Activated T-helper 2 cell treated with anti-CD3 and anti-CD28 coated beads, Interferon-gamma antibody, Interleukin-2, Interleukin-4, amounts not matched to agents 10 μg/mL and 5 μg/mL and 100 μg/mL, durations not matched to agents 14 hours and 24 hours and 36 hours (primary cell): ENCODE measurements at regions of chr15 and their contacts with region 1.

Region 1: GRCh38 chr15:40754883-40755811 is at the start of gene RMDN3:
- DNase-seq: peak; percentile 93
- H3K4me3 Mint-ChIP-seq: peak within 1 kb of the TSS; percentile 94
- H3K27ac Mint-ChIP-seq: peak within 1 kb of the TSS; percentile 98
- H3K4me1 Mint-ChIP-seq: peaks cover 27% of the 10 kb centered on the region
- H3K27me3 Mint-ChIP-seq: no peaks in the 10 kb centered on the region
- total RNA-seq, gene RMDN3: 28.3 and 30.6 TPM in 2 replicates

Region 2: DNA sequence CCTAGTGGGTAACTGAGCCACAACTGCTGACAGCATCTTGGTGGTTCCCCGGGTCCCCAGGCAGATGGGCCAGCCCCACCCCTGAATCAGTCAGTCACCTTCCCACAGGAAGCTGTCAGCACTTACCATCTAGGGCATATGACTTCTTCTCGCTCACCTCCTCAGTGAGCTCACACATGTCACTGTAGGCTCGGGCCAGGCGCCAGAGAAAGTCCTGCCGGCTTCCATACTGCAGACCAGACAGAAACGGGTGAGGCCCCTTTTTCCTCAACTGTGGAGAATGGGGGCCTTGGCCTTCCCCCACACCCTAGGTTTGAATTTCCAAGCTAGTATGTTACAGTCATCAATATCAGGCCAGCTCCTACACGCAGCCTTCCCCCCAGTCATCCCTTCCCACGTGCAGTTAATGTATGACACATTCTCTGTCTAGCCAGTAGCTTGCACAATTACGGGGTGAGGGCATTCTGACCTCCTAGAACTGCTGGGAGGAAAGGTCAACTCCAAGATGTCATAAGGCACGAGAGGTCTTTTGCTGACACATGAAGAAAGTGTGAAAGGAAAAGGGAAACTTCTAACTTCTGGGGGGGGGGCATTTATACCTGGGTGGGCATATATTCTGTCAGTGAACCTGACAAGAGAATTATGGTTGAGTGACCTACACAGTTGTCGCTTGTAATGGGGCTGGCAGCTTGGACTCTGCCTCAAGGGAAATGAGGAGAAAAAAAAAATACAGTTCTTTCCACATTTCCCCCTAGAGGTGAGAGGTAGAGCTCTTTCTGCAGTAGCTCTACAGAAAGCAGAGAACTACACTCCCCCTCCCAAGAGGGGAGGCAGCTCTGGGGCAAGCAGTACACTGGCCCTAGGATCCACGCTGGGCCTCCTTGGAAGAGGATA is 11.0 kb before region 1 on chr15:
- intact Hi-C with region 1: loop called (anchors 1 kb)
- DNase-seq: peak; percentile 63
- H3K4me3 Mint-ChIP-seq: peak overlapping the region; percentile 42
- H3K27ac Mint-ChIP-seq: peak overlapping the region; percentile 92
- H3K4me1 Mint-ChIP-seq: peaks cover 24% of the 10 kb centered on the region
- H3K27me3 Mint-ChIP-seq: no peaks in the 10 kb centered on the region

Region 3: GRCh38 chr15:40807028-40807887 is 52.1 kb after region 1 on chr15 and contains the starts of genes DNAJC17 and ZFYVE19:
- intact Hi-C with region 1: loop called (anchors 1 kb)
- DNase-seq: peak; percentile 93
- H3K4me3 Mint-ChIP-seq: peak within 1 kb of the TSS; percentile 96
- H3K27ac Mint-ChIP-seq: peak within 1 kb of the TSS; percentile 98
- H3K4me1 Mint-ChIP-seq: peaks cover 18% of the 10 kb centered on the region
- H3K27me3 Mint-ChIP-seq: no peaks in the 10 kb centered on the region
- total RNA-seq, gene DNAJC17: 44.4 and 48.0 TPM in 2 replicates
- total RNA-seq, gene ZFYVE19: 37.6 and 39.3 TPM in 2 replicates